SK-N-SH (cell line): ENCODE measurements at regions of chr11 and their contacts with region 1.

Region 1: GRCh38 chr11:119196833-119197483 is 9.2 kb upstream of the CBL start:
- DNase-seq: peak; percentile 81
- H3K4me3 ChIP-seq: no peak overlapping the region; a peak in 1 of 4 replicates
- H3K27ac ChIP-seq: no peak overlapping the region
- H3K4me1 ChIP-seq: no peaks in the 10 kb centered on the region
- H3K27me3 ChIP-seq: no peaks in the 10 kb centered on the region
- CTCF ChIP-seq: peak; percentile 89
- EP300 ChIP-seq: no peak
- RAD21 ChIP-seq: peak; percentile 93

Region 2: GRCh38 chr11:119095066-119095880 is 101.7 kb before region 1 on chr11:
- CTCF ChIA-PET with region 1: interaction called, 10 read pairs
- POLR2A ChIA-PET with region 1: interaction called, 5 read pairs
- DNase-seq: peak; percentile 96
- H3K4me3 ChIP-seq: peak overlapping the region; percentile 84 to 87
- H3K27ac ChIP-seq: peak overlapping the region; percentile 72 to 89
- H3K4me1 ChIP-seq: peaks cover 22 to 24% of the 10 kb centered on the region in 2 experiments; a peak in 3 of 4 replicates
- H3K27me3 ChIP-seq: no peaks in the 10 kb centered on the region
- CTCF ChIP-seq: 0 out of 2 replicates have a peak, but pooled peaks have one; percentile 14
- EP300 ChIP-seq: peak in 1 of 2 experiments; percentile 57; a peak in 1 of 4 replicates
- RAD21 ChIP-seq: peak; percentile 31

Region 3: DNA sequence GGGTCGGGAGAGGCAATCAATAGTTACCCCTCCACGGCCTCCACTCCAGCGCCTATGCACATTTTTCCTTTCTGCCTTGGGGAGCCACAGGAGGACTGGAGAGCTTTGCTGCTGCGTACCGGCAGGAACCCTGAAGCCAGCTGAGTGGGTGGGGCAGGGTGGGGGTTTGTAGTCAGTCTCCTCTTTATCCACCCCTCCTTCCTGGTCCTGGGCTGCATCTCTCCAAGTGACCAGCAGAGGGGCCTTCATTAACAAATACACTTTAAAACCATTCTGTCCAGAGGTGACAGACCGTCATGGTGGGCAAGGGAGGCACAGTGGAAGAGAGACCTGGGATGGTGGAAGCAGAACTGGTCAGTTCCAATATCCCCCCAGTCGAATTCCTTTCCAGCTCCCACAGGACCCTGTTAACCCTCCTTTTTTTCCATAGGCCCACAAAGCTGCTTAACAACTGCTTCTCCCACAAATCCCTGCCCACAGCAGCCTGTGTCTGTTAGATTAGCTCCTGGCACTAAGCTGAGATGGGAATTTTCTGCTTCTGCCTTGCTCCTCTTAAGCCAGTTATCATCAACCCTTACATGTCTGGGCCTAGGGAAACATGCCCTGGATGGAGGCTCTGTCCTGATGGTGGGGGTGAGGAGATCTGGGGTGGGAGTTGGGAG is 52.0 kb before region 1 on chr11:
- CTCF ChIA-PET with region 1: interaction called, 48 read pairs
- POLR2A ChIA-PET with region 1: no interaction called
- DNase-seq: peak; percentile 93
- H3K4me3 ChIP-seq: no peak overlapping the region
- H3K27ac ChIP-seq: no peak overlapping the region
- H3K4me1 ChIP-seq: peaks cover 0 to 13% of the 10 kb centered on the region in 2 experiments; a peak in 1 of 4 replicates
- H3K27me3 ChIP-seq: no peaks in the 10 kb centered on the region; the same call in 1 of the 2 replicates
- CTCF ChIP-seq: peak; percentile 60
- EP300 ChIP-seq: no peak
- RAD21 ChIP-seq: peak; percentile 68

Region 4: GRCh38 chr11:119168471-119169281 is 28.3 kb before region 1 on chr11 and contains the start of gene NLRX1:
- CTCF ChIA-PET with region 1: interaction called, 32 read pairs
- POLR2A ChIA-PET with region 1: no interaction called
- DNase-seq: peak; percentile 98
- H3K4me3 ChIP-seq: peak within 1 kb of the TSS; percentile 61 to 76
- H3K27ac ChIP-seq: peak within 1 kb of the TSS; percentile 55 to 74
- H3K4me1 ChIP-seq: peaks cover 5 to 8% of the 10 kb centered on the region in 2 experiments; a peak in 2 of 4 replicates
- H3K27me3 ChIP-seq: no peaks in the 10 kb centered on the region
- CTCF ChIP-seq: peak; percentile 82
- EP300 ChIP-seq: no peak
- RAD21 ChIP-seq: peak; percentile 51; the same call in 1 of the 2 replicates
- polyA plus RNA-seq, gene NLRX1: 13.7 and 13.8 TPM in 2 replicates

Region 5: GRCh38 chr11:119175493-119176077 is 21.4 kb before region 1 on chr11:
- CTCF ChIA-PET with region 1: interaction called, 32 read pairs
- POLR2A ChIA-PET with region 1: no interaction called
- DNase-seq: peak; percentile 70
- H3K4me3 ChIP-seq: no peak overlapping the region
- H3K27ac ChIP-seq: peak overlapping the region; percentile 36 to 78; a peak in 3 of 4 replicates
- H3K4me1 ChIP-seq: peaks cover 10 to 14% of the 10 kb centered on the region in 2 experiments; a peak in 2 of 4 replicates
- H3K27me3 ChIP-seq: no peaks in the 10 kb centered on the region
- CTCF ChIP-seq: no peak
- EP300 ChIP-seq: peak in 1 of 2 experiments; percentile 23; a peak in 1 of 4 replicates
- RAD21 ChIP-seq: no peak

Region 6: GRCh38 chr11:119181677-119182412 is 15.1 kb before region 1 on chr11:
- CTCF ChIA-PET with region 1: interaction called, 12 read pairs
- POLR2A ChIA-PET with region 1: no interaction called
- DNase-seq: no peak
- H3K4me3 ChIP-seq: no peak overlapping the region
- H3K27ac ChIP-seq: no peak overlapping the region
- H3K4me1 ChIP-seq: peaks cover 0 to 9% of the 10 kb centered on the region in 2 experiments; a peak in 1 of 4 replicates
- H3K27me3 ChIP-seq: no peaks in the 10 kb centered on the region
- CTCF ChIP-seq: no peak
- EP300 ChIP-seq: no peak
- RAD21 ChIP-seq: no peak

Region 7: GRCh38 chr11:119262668-119263351 is 65.9 kb after region 1 on chr11:
- CTCF ChIA-PET with region 1: no interaction called
- POLR2A ChIA-PET with region 1: no interaction called
- DNase-seq: no peak
- H3K4me3 ChIP-seq: no peak overlapping the region; a peak in 1 of 4 replicates
- H3K27ac ChIP-seq: peak overlapping the region; percentile 11 to 61; a peak in 3 of 4 replicates
- H3K4me1 ChIP-seq: peaks cover 0 to 2% of the 10 kb centered on the region in 2 experiments; a peak in 2 of 4 replicates
- H3K27me3 ChIP-seq: no peaks in the 10 kb centered on the region
- CTCF ChIP-seq: peak; percentile 38
- EP300 ChIP-seq: no peak
- RAD21 ChIP-seq: no peak

Region 8: DNA sequence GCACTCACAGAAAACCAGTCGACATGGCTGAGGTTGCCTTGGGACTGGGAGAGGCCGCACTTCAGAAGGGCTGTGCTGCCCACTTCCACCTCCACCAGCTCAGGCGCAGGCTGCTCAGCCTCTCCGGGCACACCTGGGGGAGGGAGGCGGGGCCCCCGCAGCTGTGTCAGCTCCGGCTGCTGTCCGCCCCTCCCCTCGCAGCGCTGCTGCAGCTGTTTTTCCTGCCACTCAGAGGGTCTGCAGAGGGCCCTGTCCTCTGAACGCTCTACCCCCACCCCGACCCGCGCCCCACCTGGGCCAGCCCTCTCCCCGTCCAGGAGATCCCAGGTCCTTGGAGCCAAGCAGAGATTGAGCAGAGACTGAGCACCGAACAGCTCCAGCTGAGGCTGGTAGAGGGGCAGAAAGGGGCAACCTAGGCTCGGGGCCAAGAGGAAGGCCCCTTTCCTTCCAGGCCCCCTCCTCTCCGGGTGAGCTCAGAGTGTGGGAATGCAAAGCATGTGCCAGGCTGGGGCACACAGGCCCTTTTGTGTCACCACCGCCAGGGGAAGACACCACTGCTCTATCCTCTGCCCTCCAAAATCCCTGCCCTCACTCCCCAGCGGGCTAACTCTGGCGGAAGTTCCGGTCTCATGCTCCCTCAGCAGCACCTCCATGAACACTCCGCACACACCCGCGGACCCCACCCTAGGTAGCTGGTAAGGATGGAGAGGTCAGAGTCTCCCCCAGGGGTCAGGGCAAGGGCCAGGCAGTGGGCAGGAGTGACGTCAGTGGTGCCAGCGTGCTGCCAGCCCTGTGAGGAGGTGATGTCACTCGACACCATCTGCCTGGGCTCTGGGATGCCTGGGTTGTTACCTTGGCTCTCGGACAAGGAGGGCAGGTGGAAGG is 118.4 kb after region 1 on chr11:
- CTCF ChIA-PET with region 1: interaction called, 18 read pairs
- POLR2A ChIA-PET with region 1: no interaction called
- DNase-seq: peak; percentile 72
- H3K4me3 ChIP-seq: peak overlapping the region; percentile 55 to 68; a peak in 3 of 4 replicates
- H3K27ac ChIP-seq: no peak overlapping the region
- H3K4me1 ChIP-seq: peaks cover 12 to 31% of the 10 kb centered on the region in 2 experiments; a peak in 2 of 4 replicates
- H3K27me3 ChIP-seq: no peaks in the 10 kb centered on the region
- CTCF ChIP-seq: peak; percentile 19; the same call in 1 of the 2 replicates
- EP300 ChIP-seq: no peak
- RAD21 ChIP-seq: no peak